WTC11 (cell line): ENCODE measurements at regions of chr20 and their contacts with region 1.

Region 1: GRCh38 chr20:31630187-31630790 is 7.4 kb upstream of the COX4I2 start:
- DNase-seq: no peak
- ATAC-seq: no peak
- H3K4me3 Mint-ChIP-seq: no peak overlapping the region
- H3K27ac Mint-ChIP-seq: no peak overlapping the region
- H3K4me1 Mint-ChIP-seq: no peaks in the 10 kb centered on the region
- H3K27me3 Mint-ChIP-seq: no peaks in the 10 kb centered on the region
- CTCF ChIP-seq: no peak

Region 2: GRCh38 chr20:31430568-31431115 is 199.6 kb before region 1 on chr20:
- CTCF ChIA-PET with region 1: no interaction called
- POLR2A ChIA-PET with region 1: no interaction called
- DNase-seq: no peak
- ATAC-seq: no peak
- H3K4me3 Mint-ChIP-seq: no peak overlapping the region
- H3K27ac Mint-ChIP-seq: no peak overlapping the region
- H3K4me1 Mint-ChIP-seq: no peaks in the 10 kb centered on the region
- H3K27me3 Mint-ChIP-seq: peaks cover 10% of the 10 kb centered on the region
- CTCF ChIP-seq: no peak

Region 3: GRCh38 chr20:31560094-31560899 is 70.0 kb before region 1 on chr20:
- CTCF ChIA-PET with region 1: interaction called, 87 read pairs
- POLR2A ChIA-PET with region 1: no interaction called
- DNase-seq: peak; percentile 77
- ATAC-seq: peak; percentile 52
- H3K4me3 Mint-ChIP-seq: no peak overlapping the region
- H3K27ac Mint-ChIP-seq: peak overlapping the region; percentile 93
- H3K4me1 Mint-ChIP-seq: peaks cover 10% of the 10 kb centered on the region
- H3K27me3 Mint-ChIP-seq: no peaks in the 10 kb centered on the region
- CTCF ChIP-seq: peak; percentile 91

Region 4: GRCh38 chr20:31580706-31581105 is 49.6 kb before region 1 on chr20:
- CTCF ChIA-PET with region 1: interaction called, 11 read pairs
- POLR2A ChIA-PET with region 1: no interaction called
- DNase-seq: no peak
- ATAC-seq: peak; percentile 23
- H3K4me3 Mint-ChIP-seq: no peak overlapping the region
- H3K27ac Mint-ChIP-seq: peak overlapping the region; percentile 97
- H3K4me1 Mint-ChIP-seq: peaks cover 57% of the 10 kb centered on the region
- H3K27me3 Mint-ChIP-seq: no peaks in the 10 kb centered on the region; the same call in 1 of the 2 replicates
- CTCF ChIP-seq: no peak

Region 5: DNA sequence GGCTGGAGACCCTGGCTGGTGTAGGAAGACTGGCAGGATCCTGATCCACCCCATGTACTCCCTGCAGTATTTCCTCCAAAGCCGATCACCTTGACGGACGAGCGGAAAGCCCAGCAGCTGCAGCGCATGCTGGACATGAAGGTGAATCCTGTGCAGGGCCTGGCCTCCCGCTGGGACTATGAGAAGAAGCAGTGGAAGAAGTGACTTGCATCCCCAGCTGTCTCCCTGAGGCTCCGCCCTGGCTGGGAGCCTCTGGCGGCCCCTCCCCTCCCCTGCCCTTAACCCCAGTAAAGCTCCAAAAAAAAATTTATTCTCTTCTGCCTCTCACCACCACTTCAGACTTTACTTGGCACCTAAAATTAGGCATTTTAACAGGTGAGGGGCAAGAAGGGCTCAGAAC is 14.4 kb after region 1 on chr20:
- CTCF ChIA-PET with region 1: interaction called, 36 read pairs
- POLR2A ChIA-PET with region 1: no interaction called
- DNase-seq: no peak
- ATAC-seq: no peak
- H3K4me3 Mint-ChIP-seq: no peak overlapping the region
- H3K27ac Mint-ChIP-seq: no peak overlapping the region
- H3K4me1 Mint-ChIP-seq: no peaks in the 10 kb centered on the region
- H3K27me3 Mint-ChIP-seq: no peaks in the 10 kb centered on the region; the same call in 1 of the 2 replicates
- CTCF ChIP-seq: no peak

Region 6: DNA sequence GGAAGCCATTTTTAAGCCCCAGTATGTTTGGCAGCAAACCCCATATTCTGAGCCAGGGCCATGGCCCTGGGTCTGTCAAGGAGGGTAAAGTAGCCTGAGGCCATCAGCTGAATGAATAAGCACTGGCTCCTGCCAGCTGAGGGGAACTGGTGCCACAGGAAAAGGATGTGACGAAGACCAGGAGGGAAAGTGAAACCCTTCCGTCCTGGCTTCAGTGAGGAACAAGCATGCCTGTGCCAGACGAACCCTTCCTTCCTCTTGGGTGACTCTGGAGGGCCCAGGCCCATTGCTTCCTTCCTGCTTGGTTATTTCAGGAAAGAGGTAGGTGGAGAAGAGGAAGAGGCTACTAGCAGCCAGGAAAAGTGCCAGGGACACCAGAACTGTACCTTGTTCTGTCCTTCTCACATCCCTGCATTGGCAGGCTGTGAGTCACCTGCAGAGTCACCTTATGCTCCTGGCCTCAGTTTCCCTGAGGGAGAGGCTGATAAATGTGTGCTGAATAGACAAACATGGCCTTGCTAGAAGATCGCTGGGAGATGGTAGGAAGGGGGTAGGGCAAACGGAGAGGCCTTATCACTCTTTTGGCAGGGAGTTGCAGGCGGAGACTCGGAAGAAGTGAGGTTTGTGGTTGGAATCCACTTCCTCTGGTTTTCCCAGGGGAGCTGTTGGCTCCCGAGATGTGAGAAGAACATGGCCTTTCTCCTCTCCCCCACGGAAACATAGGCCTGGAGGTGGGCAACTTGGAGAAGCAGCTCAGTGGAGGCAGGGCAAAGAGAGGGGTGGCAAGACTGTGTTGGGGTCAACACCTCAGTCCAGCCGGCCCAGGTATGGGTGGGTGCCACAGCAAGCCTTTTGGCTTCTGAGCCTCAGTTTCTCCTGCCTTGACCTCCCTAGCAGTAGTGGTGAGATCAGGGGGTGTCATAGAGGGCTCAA is 44.9 kb after region 1 on chr20:
- CTCF ChIA-PET with region 1: interaction called, 10 read pairs
- POLR2A ChIA-PET with region 1: no interaction called
- DNase-seq: no peak
- ATAC-seq: no peak
- H3K4me3 Mint-ChIP-seq: no peak overlapping the region
- H3K27ac Mint-ChIP-seq: peak overlapping the region; percentile 80
- H3K4me1 Mint-ChIP-seq: peaks cover 37% of the 10 kb centered on the region
- H3K27me3 Mint-ChIP-seq: no peaks in the 10 kb centered on the region
- CTCF ChIP-seq: no peak

Region 7: GRCh38 chr20:31738729-31739561 is 108.7 kb after region 1 on chr20 and contains the start of gene TPX2:
- CTCF ChIA-PET with region 1: interaction called, 10 read pairs
- POLR2A ChIA-PET with region 1: no interaction called
- DNase-seq: peak; percentile 94
- ATAC-seq: peak; percentile 99
- H3K4me3 Mint-ChIP-seq: no peak within 1 kb of the TSS
- H3K27ac Mint-ChIP-seq: no peak within 1 kb of the TSS
- H3K4me1 Mint-ChIP-seq: no peaks in the 10 kb centered on the region
- H3K27me3 Mint-ChIP-seq: peaks cover 4% of the 10 kb centered on the region
- CTCF ChIP-seq: no peak
- total RNA-seq, gene TPX2: 113 to 123 TPM (median 115 TPM) in 3 replicates

Region 8: DNA sequence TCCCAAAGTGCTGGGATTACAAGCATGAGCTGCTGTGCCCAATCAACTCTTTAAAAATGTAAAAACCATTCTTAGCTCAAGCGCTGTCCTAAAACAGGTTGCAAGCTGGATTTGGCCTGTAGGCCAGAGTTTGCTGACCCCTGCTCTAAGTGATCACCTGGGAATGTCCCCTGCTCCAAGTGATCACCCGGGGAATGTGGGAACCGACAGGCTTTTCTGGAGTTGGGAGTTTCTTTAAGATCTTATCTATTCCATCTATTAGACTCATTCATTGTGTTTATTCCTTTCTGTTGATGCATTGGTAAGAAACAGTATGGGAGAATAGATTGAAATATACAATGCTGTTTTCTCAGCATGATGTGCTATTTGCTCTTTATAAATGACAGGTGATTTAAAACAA is 165.1 kb after region 1 on chr20:
- CTCF ChIA-PET with region 1: no interaction called
- POLR2A ChIA-PET with region 1: no interaction called
- DNase-seq: no peak
- ATAC-seq: no peak
- H3K4me3 Mint-ChIP-seq: no peak overlapping the region
- H3K27ac Mint-ChIP-seq: no peak overlapping the region
- H3K4me1 Mint-ChIP-seq: no peaks in the 10 kb centered on the region
- H3K27me3 Mint-ChIP-seq: no peaks in the 10 kb centered on the region
- CTCF ChIP-seq: no peak

Region 9: DNA sequence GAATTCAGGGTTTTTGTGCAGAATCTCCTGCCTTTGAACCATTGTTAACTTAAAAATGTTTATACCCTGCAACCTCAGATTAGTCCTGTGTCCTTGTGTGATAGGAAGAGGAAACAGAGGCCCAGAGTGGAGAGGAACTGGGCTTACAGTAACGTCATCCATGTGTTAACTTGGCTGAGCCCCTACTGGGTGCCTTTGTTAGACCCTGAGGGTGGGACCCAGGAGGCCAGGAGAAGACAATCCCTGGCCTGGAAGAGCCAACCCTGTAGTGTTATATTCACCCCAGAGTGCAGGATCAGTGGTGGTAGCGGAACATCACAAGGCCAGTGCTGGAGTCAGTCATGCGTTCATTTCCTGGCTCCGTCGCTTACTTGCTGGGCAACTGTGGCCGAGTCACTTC is 199.4 kb after region 1 on chr20:
- CTCF ChIA-PET with region 1: no interaction called
- POLR2A ChIA-PET with region 1: no interaction called
- DNase-seq: no peak
- ATAC-seq: no peak
- H3K4me3 Mint-ChIP-seq: no peak overlapping the region
- H3K27ac Mint-ChIP-seq: no peak overlapping the region
- H3K4me1 Mint-ChIP-seq: no peaks in the 10 kb centered on the region
- H3K27me3 Mint-ChIP-seq: no peaks in the 10 kb centered on the region
- CTCF ChIP-seq: no peak